Dendritic cell treated with granulocyte-macrophage colony-stimulating factor and Interleukin-4, amounts not matched to agents 40 ng/mL and 50 ng/mL, for 4 days (primary cell): ENCODE measurements at regions of chr4 and their contacts with region 1.

Region 1: DNA sequence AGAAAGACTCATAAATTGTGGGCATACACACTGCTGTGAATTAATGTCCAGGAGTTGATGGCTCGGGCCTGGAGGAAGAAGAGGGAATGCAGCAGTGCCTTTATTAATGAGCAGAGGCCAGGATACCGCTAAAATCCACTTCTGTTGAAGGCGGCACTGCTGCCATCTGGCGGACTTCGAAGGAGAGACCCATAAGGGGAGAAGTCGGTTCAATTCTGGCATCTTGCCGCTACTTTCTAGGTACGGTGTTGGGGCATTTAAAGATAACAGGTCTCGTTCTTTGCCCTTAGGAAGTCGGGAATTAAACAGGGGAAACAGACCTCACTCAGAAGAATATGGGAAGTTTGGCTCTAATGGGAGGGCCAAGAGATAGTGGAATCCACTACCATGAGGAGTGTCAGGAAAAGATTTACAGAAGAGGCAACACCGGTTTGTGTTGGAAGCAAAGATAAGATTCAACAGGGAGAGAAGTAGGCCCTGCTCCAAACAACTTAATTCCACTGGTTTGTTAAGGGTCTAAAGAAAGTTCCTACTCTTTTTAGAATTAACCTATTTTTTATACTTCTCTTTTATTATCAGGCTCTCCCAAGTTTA is 133.6 kb upstream of the GIMD1 start:
- H3K4me3 Mint-ChIP-seq: no peak overlapping the region
- H3K27ac Mint-ChIP-seq: no peak overlapping the region
- H3K4me1 Mint-ChIP-seq: peaks cover 6% of the 10 kb centered on the region
- H3K27me3 Mint-ChIP-seq: peaks cover 5% of the 10 kb centered on the region

Region 2: GRCh38 chr4:106266201-106266600 is 236.0 kb before region 1 on chr4:
- intact Hi-C with region 1: loop called (anchors 2 kb)
- H3K4me3 Mint-ChIP-seq: no peak overlapping the region
- H3K27ac Mint-ChIP-seq: no peak overlapping the region
- H3K4me1 Mint-ChIP-seq: no peaks in the 10 kb centered on the region
- H3K27me3 Mint-ChIP-seq: no peaks in the 10 kb centered on the region